Breast epithelium (tissue), 4 donors: ENCODE measurements at regions of chr4 and their contacts with region 1.

Region 1: DNA sequence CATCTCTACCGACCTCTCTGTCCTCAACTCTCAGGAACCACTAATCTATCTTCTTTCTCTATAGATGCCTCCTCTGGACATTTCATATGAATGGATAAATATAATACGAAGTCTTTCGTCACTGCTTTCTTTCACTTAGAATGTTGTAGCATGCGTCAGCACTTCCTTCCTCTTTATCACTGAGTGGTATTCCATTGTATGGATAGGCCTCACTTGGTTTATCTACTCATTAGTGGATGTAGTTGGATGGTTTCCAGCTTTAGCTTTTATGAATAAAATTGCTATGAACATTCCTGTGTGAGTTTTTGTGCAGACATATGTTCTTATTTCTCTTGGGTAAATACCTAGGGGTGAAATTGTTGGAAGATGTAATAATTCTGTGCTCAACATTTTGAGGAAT is 528.2 kb upstream of the FAT1 start:
- DNase-seq: no peak
- H3K4me3 ChIP-seq: no peak overlapping the region
- H3K27ac ChIP-seq: no peak overlapping the region
- H3K4me1 ChIP-seq: no peaks in the 10 kb centered on the region
- H3K27me3 ChIP-seq: no peaks in the 10 kb centered on the region
- CTCF ChIP-seq: no peak
- POLR2A ChIP-seq: no peak

Region 2: DNA sequence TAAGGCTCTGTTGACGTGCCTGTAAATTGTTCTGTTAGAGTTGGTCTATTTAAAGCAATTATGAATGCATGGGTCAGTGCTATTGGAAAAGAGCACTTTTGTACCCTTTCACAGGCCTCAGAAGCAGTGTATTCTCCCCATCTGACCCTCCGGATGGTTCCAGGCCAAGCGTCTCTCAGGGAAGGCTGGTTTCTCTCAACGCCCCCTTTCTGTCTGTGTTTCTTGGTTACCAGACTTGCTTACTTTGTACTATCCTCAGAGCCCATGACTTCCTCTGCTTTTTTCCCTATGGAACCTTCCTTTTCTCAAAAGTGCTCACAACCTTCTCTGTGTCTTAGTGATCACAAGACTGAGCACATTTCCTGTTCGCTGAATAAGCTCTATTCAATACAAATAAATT is 184.4 kb after region 1 on chr4:
- intact Hi-C with region 1: loop called (anchors 5 kb)
- DNase-seq: no peak
- H3K4me3 ChIP-seq: no peak overlapping the region
- H3K27ac ChIP-seq: no peak overlapping the region
- H3K4me1 ChIP-seq: no peaks in the 10 kb centered on the region
- H3K27me3 ChIP-seq: no peaks in the 10 kb centered on the region
- CTCF ChIP-seq: no peak
- POLR2A ChIP-seq: no peak

Region 3: GRCh38 chr4:187656959-187657358 is 405.1 kb after region 1 on chr4:
- intact Hi-C with region 1: no loop called
- DNase-seq: no peak
- H3K4me3 ChIP-seq: no peak overlapping the region
- H3K27ac ChIP-seq: no peak overlapping the region
- H3K4me1 ChIP-seq: no peaks in the 10 kb centered on the region
- H3K27me3 ChIP-seq: no peaks in the 10 kb centered on the region
- CTCF ChIP-seq: no peak
- POLR2A ChIP-seq: no peak